Transverse colon (tissue), 4 donors: ENCODE measurements at regions of chr22 and their contacts with region 1.

Region 1: DNA sequence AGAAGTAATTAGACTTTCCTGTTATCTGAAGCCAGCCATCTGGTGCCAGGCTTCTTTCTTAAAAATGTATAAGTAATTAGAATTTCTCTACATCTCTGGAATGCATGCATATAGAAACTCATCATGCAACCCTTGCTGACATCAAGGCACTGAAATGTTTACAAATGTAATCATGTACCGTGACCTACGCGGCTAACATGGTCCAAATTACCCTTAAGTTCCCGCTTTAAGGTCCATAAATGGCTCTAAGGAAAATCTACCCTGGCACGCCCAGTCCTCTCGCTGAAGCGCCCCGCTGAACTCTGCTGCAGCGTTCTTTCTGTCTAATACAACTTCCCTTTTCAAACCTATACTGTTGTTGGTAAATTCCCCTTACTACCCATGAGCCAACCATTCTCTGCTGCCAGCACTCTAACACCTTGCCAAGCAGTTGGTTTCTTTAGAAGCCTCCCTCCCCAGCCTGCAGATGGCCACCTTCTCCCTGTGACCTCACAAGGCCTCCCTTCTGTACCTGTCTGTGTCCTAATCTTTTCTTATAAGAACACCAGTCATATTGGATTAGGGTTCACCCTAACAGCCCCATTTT is 13.5 kb upstream of the HMOX1 start:
- DNase-seq: peak; percentile 55
- H3K4me3 ChIP-seq: no peak overlapping the region
- H3K27ac ChIP-seq: peak overlapping the region; percentile 30 to 59 (median 46)
- H3K4me1 ChIP-seq: peaks cover 8 to 30% (median 20%) of the 10 kb centered on the region in 4 donors
- H3K27me3 ChIP-seq: no peaks in the 10 kb centered on the region
- CTCF ChIP-seq: no peak
- EP300 ChIP-seq: no peak
- POLR2A ChIP-seq: no peak

Region 2: DNA sequence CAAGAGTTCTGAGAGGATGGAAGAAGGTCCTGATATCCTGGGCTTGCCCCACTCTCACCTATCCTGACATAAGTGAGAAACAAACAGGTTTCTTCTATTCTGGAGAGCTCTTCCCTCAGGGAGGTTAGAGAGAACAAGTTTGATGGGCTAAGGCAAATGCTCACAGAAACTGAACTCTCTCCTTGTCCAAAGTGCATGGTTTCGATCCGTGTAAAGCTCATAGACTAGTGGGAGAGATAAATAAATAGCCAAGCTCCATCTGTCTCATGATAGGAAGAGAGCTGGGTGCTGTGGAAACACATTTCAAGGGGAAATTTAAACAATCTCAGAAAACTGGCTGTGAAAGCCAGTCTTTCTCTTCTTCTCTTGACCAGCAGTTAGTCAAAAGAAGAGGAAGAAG is 987.6 kb before region 1 on chr22:
- in situ Hi-C with region 1: no loop called
- intact Hi-C with region 1: loop called (anchors 10 kb)
- DNase-seq: no peak
- H3K4me3 ChIP-seq: no peak overlapping the region
- H3K27ac ChIP-seq: no peak overlapping the region
- H3K4me1 ChIP-seq: no peaks in the 10 kb centered on the region
- H3K27me3 ChIP-seq: no peaks in the 10 kb centered on the region
- CTCF ChIP-seq: no peak
- EP300 ChIP-seq: no peak
- POLR2A ChIP-seq: no peak

Region 3: DNA sequence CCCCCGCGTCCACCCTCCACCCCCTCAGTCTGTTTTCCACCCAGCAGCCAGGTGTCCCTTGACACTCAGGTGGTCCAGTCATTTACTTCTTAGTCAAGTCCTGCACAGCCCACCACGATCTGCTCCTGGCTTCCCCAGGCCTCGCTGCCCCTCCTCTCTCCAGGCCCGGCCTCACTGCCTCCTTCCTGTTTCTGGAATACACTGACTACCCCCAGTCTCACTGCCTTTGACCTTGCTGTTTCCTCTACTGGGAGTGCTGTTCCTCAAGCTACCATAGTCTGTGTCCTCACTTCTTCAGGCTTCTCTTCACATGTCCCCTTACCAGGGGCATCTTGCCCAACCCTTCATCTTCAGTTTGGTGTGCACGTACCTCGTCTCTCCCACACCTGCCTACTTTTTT is 40.0 kb after region 1 on chr22:
- in situ Hi-C with region 1: no loop called
- intact Hi-C with region 1: loop called (anchors 1 kb)
- DNase-seq: no peak
- H3K4me3 ChIP-seq: no peak overlapping the region
- H3K27ac ChIP-seq: no peak overlapping the region
- H3K4me1 ChIP-seq: no peaks in the 10 kb centered on the region
- H3K27me3 ChIP-seq: no peaks in the 10 kb centered on the region
- CTCF ChIP-seq: no peak
- EP300 ChIP-seq: no peak
- POLR2A ChIP-seq: no peak